Activated B cell treated with CpG ODN at 0.5 μM for 24 hours (primary cell): ENCODE measurements at regions of chr3 and their contacts with region 1.

Region 1: GRCh38 chr3:50192689-50193141 is 1.3 kb downstream of the GNAT1 start:
- DNase-seq: peak; percentile 82
- ATAC-seq: peak; percentile 72
- H3K4me3 Mint-ChIP-seq: no peak overlapping the region
- H3K27ac Mint-ChIP-seq: no peak overlapping the region
- H3K4me1 Mint-ChIP-seq: peaks cover 18% of the 10 kb centered on the region
- H3K27me3 Mint-ChIP-seq: peaks cover 11% of the 10 kb centered on the region
- CTCF ChIP-seq: no peak

Region 2: DNA sequence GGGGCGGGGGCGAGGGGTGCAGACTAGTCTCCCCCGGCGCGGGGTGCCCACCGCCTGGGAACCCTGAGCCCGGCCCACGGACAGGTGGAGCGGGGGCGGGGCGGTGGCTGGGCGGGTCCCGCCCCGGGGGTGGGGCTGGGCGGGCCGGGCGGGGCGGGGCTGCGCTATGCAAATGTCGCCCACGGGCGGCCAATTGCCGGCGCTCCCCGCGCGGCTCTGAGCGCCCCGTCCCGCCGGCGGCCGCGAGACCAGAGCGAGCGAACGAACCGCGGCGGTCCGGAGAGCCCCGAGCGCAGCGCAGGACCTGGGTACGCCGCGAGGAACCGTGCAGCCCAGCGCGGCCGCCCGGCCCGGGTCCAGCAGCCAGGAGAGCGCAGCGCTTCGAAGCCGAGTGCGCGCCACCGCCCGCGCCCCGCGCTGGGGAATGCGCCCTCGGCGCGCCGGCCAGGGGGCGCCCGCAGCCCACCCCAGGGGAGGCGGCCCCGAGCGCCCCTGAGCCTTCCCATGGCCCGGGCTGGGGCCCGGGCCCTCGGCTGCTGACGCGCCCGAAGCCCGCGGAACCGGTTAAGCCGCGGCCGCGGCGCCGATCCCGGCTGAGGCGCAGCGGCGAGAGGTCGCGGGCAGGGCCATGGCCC is 37.8 kb before region 1 on chr3 and contains the start of gene SEMA3F:
- CTCF ChIA-PET with region 1: no interaction called
- POLR2A ChIA-PET with region 1: no interaction called
- intact Hi-C with region 1: loop called (anchors 2 kb)
- DNase-seq: peak; percentile 63
- ATAC-seq: peak; percentile 92
- H3K4me3 Mint-ChIP-seq: peak within 1 kb of the TSS; percentile 79
- H3K27ac Mint-ChIP-seq: no peak within 1 kb of the TSS
- H3K4me1 Mint-ChIP-seq: peaks cover 13% of the 10 kb centered on the region
- H3K27me3 Mint-ChIP-seq: peaks cover 34% of the 10 kb centered on the region
- CTCF ChIP-seq: no peak
- total RNA-seq, gene SEMA3F: 0.34 TPM in 1 of 2 replicates, not detected in the other

Region 3: DNA sequence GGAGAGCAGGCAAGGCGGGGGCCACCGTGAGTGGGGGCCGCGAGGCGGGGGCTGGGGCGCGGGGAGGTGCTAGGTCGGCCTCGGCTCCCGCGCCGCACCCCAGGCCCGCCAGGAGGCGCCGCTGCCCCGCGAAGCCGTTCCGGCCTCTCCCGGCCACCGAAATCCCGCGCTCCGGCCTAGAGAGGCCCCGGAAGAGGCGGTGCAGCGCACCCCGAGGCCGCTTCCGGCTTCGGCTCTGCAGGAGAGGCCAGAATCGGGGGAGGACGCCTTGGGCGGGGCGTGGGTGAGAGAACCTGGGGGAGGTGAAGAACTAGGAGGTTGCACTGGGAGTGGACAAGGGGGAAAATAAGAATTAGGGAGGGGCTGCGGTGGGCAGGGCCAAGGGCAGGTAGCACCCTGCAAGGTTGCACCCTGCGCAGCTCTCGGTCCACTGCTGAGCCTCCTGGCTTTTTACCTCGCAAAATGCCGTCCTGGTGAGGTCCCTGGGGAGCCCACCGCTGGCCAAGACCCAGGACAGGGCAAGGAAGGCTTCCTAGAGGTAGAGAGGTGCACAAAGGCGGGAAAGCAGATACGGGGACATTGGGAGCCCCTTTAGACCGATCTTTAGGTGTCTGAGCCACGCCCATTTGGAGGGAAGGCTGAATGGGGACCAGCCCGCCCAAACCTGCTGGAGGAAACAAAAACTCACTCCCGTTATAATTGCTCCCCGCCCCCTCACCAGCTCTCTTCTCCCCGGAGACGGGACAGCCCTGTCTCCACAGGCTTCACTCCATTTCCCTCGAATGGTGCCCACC is 34.9 kb after region 1 on chr3:
- CTCF ChIA-PET with region 1: interaction called, 100 read pairs
- POLR2A ChIA-PET with region 1: interaction called, 23 read pairs
- intact Hi-C with region 1: loop called (anchors 1 kb)
- DNase-seq: peak; percentile 93
- ATAC-seq: peak; percentile 81
- H3K4me3 Mint-ChIP-seq: peak overlapping the region; percentile 94
- H3K27ac Mint-ChIP-seq: peak overlapping the region; percentile 88
- H3K4me1 Mint-ChIP-seq: peaks cover 40% of the 10 kb centered on the region
- H3K27me3 Mint-ChIP-seq: peaks cover 5% of the 10 kb centered on the region
- CTCF ChIP-seq: peak; percentile 92

Region 4: DNA sequence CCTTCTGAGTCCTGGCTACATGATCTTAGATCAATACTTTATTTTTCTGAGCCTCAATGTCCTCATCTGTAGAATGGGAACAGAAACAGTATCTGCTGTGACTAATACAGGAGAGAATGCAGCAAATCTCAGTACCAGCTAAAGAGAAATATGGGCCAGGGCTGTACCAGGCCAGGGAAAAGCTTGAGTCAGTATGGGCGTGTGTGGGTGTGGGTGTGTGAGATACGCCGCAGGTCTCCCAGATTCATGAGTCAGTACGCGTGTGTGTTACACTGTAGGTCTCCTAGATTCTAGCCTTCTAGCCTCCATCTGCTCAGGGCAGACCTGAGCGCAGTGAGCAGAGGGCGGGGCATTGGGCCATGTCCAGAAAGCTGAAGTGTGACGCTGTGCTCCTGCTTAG is 58.5 kb after region 1 on chr3:
- CTCF ChIA-PET with region 1: interaction called, 34 read pairs
- POLR2A ChIA-PET with region 1: interaction called, 7 read pairs
- intact Hi-C with region 1: loop called (anchors 1 kb)
- DNase-seq: no peak
- ATAC-seq: no peak
- H3K4me3 Mint-ChIP-seq: no peak overlapping the region
- H3K27ac Mint-ChIP-seq: peak overlapping the region; percentile 30
- H3K4me1 Mint-ChIP-seq: peaks cover 49% of the 10 kb centered on the region
- H3K27me3 Mint-ChIP-seq: no peaks in the 10 kb centered on the region
- CTCF ChIP-seq: no peak

Region 5: GRCh38 chr3:50272911-50273693 is 80.4 kb after region 1 on chr3:
- CTCF ChIA-PET with region 1: interaction called, 16 read pairs
- POLR2A ChIA-PET with region 1: interaction called, 4 read pairs
- intact Hi-C with region 1: loop called (anchors 1 kb)
- DNase-seq: peak; percentile 91
- ATAC-seq: peak; percentile 98
- H3K4me3 Mint-ChIP-seq: peak overlapping the region; percentile 69
- H3K27ac Mint-ChIP-seq: no peak overlapping the region
- H3K4me1 Mint-ChIP-seq: peaks cover 25% of the 10 kb centered on the region
- H3K27me3 Mint-ChIP-seq: peaks cover 35% of the 10 kb centered on the region
- CTCF ChIP-seq: no peak

Region 6: GRCh38 chr3:50542177-50543034 is 349.7 kb after region 1 on chr3:
- CTCF ChIA-PET with region 1: no interaction called
- POLR2A ChIA-PET with region 1: no interaction called
- intact Hi-C with region 1: loop called (anchors 2 kb)
- DNase-seq: peak; percentile 54
- ATAC-seq: peak; percentile 71
- H3K4me3 Mint-ChIP-seq: no peak overlapping the region
- H3K27ac Mint-ChIP-seq: peak overlapping the region; percentile 41
- H3K4me1 Mint-ChIP-seq: no peaks in the 10 kb centered on the region
- H3K27me3 Mint-ChIP-seq: peaks cover 27% of the 10 kb centered on the region
- CTCF ChIP-seq: peak; percentile 90